CD4-positive, alpha-beta T cell (primary cell): ENCODE measurements at regions of chr9 and their contacts with region 1.

Region 1: GRCh38 chr9:89522261-89522958 is 24.5 kb upstream of the SEMA4D start:
- DNase-seq: peak; percentile 54 to 94 (median 68)
- ATAC-seq: peak; percentile 85
- H3K4me3 ChIP-seq: peak overlapping the region; percentile 29
- H3K4me3 Mint-ChIP-seq: peak overlapping the region; percentile 69
- H3K27ac ChIP-seq: peak overlapping the region; percentile 81 to 94
- H3K27ac Mint-ChIP-seq: peak overlapping the region; percentile 94
- H3K4me1 ChIP-seq: peaks cover 96% of the 10 kb centered on the region
- H3K4me1 Mint-ChIP-seq: peaks cover 93% of the 10 kb centered on the region
- H3K27me3 ChIP-seq: no peaks in the 10 kb centered on the region
- H3K27me3 Mint-ChIP-seq: no peaks in the 10 kb centered on the region
- CTCF ChIP-seq: no peak

Region 2: GRCh38 chr9:89318123-89319014 is 204.0 kb before region 1 on chr9 and contains the start of gene SECISBP2:
- CTCF ChIA-PET with region 1: interaction called, 4 read pairs
- POLR2A ChIA-PET with region 1: interaction called, 3 read pairs
- intact Hi-C with region 1: loop called in 1 of 2 experiments (anchors 10 kb)
- DNase-seq: peak; percentile 85 to 97 (median 90)
- ATAC-seq: peak; percentile 87
- H3K4me3 ChIP-seq: peak within 1 kb of the TSS; percentile 69
- H3K4me3 Mint-ChIP-seq: peak within 1 kb of the TSS; percentile 88
- H3K27ac ChIP-seq: peak within 1 kb of the TSS; percentile 97 to 99
- H3K27ac Mint-ChIP-seq: peak within 1 kb of the TSS; percentile 94
- H3K4me1 ChIP-seq: peaks cover 22% of the 10 kb centered on the region
- H3K4me1 Mint-ChIP-seq: peaks cover 77% of the 10 kb centered on the region
- H3K27me3 ChIP-seq: no peaks in the 10 kb centered on the region
- H3K27me3 Mint-ChIP-seq: no peaks in the 10 kb centered on the region
- CTCF ChIP-seq: no peak
- total RNA-seq, gene SECISBP2: 109 to 112 TPM

Region 3: GRCh38 chr9:89466451-89467277 is 55.7 kb before region 1 on chr9:
- CTCF ChIA-PET with region 1: no interaction called
- POLR2A ChIA-PET with region 1: interaction called, 16 read pairs
- intact Hi-C with region 1: loop called in 1 of 2 experiments (anchors 1 kb)
- DNase-seq: peak in 2 of 14 experiments; percentile 43 to 52
- ATAC-seq: peak; percentile 2
- H3K4me3 ChIP-seq: peak overlapping the region; percentile 12
- H3K4me3 Mint-ChIP-seq: peak overlapping the region; percentile 76
- H3K27ac ChIP-seq: peak overlapping the region; percentile 64 to 84
- H3K27ac Mint-ChIP-seq: peak overlapping the region; percentile 96
- H3K4me1 ChIP-seq: peaks cover 93% of the 10 kb centered on the region
- H3K4me1 Mint-ChIP-seq: peaks cover 97% of the 10 kb centered on the region
- H3K27me3 ChIP-seq: no peaks in the 10 kb centered on the region
- H3K27me3 Mint-ChIP-seq: no peaks in the 10 kb centered on the region
- CTCF ChIP-seq: no peak

Region 4: GRCh38 chr9:89489548-89490530 is 32.6 kb before region 1 on chr9:
- CTCF ChIA-PET with region 1: interaction called, 6 read pairs
- POLR2A ChIA-PET with region 1: interaction called, 18 read pairs
- intact Hi-C with region 1: no loop called
- DNase-seq: peak in 4 of 14 experiments; percentile 33 to 92 (median 89)
- ATAC-seq: peak; percentile 84
- H3K4me3 ChIP-seq: peak overlapping the region; percentile 0
- H3K4me3 Mint-ChIP-seq: peak overlapping the region; percentile 76
- H3K27ac ChIP-seq: peak overlapping the region; percentile 65 to 67
- H3K27ac Mint-ChIP-seq: peak overlapping the region; percentile 88
- H3K4me1 ChIP-seq: peaks cover 76% of the 10 kb centered on the region
- H3K4me1 Mint-ChIP-seq: peaks cover 92% of the 10 kb centered on the region
- H3K27me3 ChIP-seq: no peaks in the 10 kb centered on the region
- H3K27me3 Mint-ChIP-seq: no peaks in the 10 kb centered on the region
- CTCF ChIP-seq: no peak

Region 5: DNA sequence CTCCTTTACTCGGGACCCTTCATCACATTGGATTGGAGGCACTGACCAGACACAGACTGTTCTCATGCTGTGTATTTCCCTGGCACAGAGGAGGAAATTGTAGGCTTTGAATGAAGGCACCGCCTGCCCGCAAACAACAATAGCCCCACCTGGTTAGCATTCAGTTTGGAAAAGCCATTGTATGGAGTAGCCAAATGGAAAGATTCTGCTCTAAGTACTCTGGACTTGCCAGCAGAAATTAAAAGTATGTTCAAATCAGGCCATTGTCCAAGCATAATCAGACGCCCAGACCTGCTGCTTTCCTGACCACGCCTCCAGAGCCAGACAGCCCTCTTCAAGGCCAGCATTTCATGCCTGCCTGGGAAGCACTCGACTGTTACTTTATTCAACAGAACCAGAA is 16.5 kb before region 1 on chr9:
- CTCF ChIA-PET with region 1: interaction called, 6 read pairs
- POLR2A ChIA-PET with region 1: interaction called, 39 read pairs
- intact Hi-C with region 1: loop called in 1 of 2 experiments (anchors 1 kb)
- DNase-seq: no peak
- ATAC-seq: no peak
- H3K4me3 ChIP-seq: no peak overlapping the region
- H3K4me3 Mint-ChIP-seq: no peak overlapping the region
- H3K27ac ChIP-seq: no peak overlapping the region
- H3K27ac Mint-ChIP-seq: no peak overlapping the region
- H3K4me1 ChIP-seq: peaks cover 54% of the 10 kb centered on the region
- H3K4me1 Mint-ChIP-seq: peaks cover 85% of the 10 kb centered on the region
- H3K27me3 ChIP-seq: no peaks in the 10 kb centered on the region
- H3K27me3 Mint-ChIP-seq: no peaks in the 10 kb centered on the region
- CTCF ChIP-seq: no peak

Region 6: GRCh38 chr9:89555451-89556375 is 33.3 kb after region 1 on chr9:
- CTCF ChIA-PET with region 1: no interaction called
- POLR2A ChIA-PET with region 1: no interaction called
- intact Hi-C with region 1: no loop called
- DNase-seq: no peak
- ATAC-seq: no peak
- H3K4me3 ChIP-seq: no peak overlapping the region
- H3K4me3 Mint-ChIP-seq: no peak overlapping the region
- H3K27ac ChIP-seq: no peak overlapping the region
- H3K27ac Mint-ChIP-seq: peak overlapping the region; percentile 30
- H3K4me1 ChIP-seq: peaks cover 13% of the 10 kb centered on the region
- H3K4me1 Mint-ChIP-seq: peaks cover 25% of the 10 kb centered on the region
- H3K27me3 ChIP-seq: no peaks in the 10 kb centered on the region
- H3K27me3 Mint-ChIP-seq: no peaks in the 10 kb centered on the region
- CTCF ChIP-seq: no peak